Body of pancreas (tissue), 4 donors: ENCODE measurements at regions of chr11 and their contacts with region 1.

Region 1: GRCh38 chr11:125345421-125346178 is 150.5 kb downstream of the FEZ1 start:
- DNase-seq: peak; percentile 74 to 85 (median 78)
- ATAC-seq: peak; percentile 84
- H3K4me3 ChIP-seq: no peak overlapping the region
- H3K27ac ChIP-seq: peak overlapping the region in 2 of 4 donors; percentile 13 to 29
- H3K4me1 ChIP-seq: peaks cover 10% of the 10 kb centered on the region
- H3K27me3 ChIP-seq: no peaks in the 10 kb centered on the region
- CTCF ChIP-seq: peak; percentile 82 to 97 (median 88)
- POLR2A ChIP-seq: no peak

Region 2: DNA sequence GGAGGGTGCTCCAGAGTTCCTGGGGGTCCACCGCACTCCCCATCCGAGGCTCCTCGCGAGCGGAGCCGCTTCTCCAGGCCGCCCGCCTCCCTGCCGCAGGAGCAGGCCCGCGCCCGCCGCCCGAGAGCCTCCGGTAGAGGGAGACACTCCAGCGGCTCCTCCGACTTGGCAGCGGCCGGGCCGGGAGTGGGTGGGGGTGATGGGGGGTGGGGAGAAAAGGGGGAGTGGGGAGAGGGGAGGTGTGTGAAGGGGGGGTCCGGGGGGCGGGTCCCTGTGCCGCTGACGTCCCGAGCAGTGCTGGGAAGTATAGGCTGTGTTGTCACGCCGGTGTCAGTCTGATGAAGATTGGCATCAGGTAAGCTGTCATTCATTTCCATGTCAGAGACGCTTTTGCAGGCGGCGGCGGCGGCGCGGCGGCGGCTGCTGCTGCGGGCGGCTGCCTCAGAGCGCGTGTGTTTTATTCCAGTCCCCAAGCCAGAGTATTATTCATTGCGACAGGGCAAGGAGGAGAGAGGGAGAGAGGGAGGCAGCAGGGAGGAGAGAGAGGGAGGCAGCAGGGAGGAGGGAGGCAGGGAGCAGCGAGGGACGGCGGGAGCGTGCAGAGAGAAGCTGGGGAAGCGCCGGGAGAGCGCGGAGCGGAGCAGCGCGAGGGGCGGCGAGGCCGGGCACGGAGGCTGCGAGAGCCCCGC is 181.0 kb before region 1 on chr11 and contains the start of gene PKNOX2:
- intact Hi-C with region 1: loop called (anchors 5 kb)
- DNase-seq: peak; percentile 72 to 85 (median 80)
- ATAC-seq: peak; percentile 57
- H3K4me3 ChIP-seq: peak within 1 kb of the TSS; percentile 6 to 22
- H3K27ac ChIP-seq: peak within 1 kb of the TSS; percentile 86 to 89 (median 88)
- H3K4me1 ChIP-seq: peaks cover 50% of the 10 kb centered on the region
- H3K27me3 ChIP-seq: no peaks in the 10 kb centered on the region
- CTCF ChIP-seq: peak; percentile 45 to 84 (median 75)
- POLR2A ChIP-seq: peak; percentile 30 to 82 (median 74)
- total RNA-seq, gene PKNOX2: 4.2 to 4.9 TPM